Psoas muscle (tissue), 8 donors: ENCODE measurements at regions of chr5 and their contacts with region 1.

Region 1: DNA sequence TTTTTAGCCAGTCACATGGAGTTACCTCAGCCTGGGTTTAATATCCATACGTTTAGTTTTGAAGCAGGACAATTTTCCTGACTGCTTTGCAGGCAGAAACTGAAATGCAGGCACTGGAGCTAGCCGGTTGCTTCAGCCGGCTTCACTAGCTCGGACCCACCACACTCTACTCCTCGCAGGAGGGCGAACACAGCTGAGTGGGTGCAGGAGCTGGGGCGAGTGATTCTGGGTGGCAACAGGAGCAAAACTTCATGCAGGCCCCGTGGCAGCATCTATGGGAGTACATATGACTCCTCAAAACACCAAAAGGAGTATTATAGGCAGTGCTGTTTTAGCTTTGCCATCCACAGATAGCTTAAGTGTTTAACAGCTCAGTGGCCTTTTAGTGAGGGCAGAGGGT is 1211.8 kb upstream of the NUDT12 start:
- DNase-seq: no peak
- ATAC-seq: no peak
- H3K4me3 ChIP-seq: no peak overlapping the region
- H3K27ac ChIP-seq: no peak overlapping the region
- H3K4me1 ChIP-seq: no peaks in the 10 kb centered on the region
- H3K27me3 ChIP-seq: no peaks in the 10 kb centered on the region
- CTCF ChIP-seq: no peak

Region 2: GRCh38 chr5:104734046-104734445 is 40.3 kb before region 1 on chr5:
- intact Hi-C with region 1: loop called in 1 of 2 experiments (anchors 1 kb)
- DNase-seq: no peak
- ATAC-seq: no peak
- H3K4me3 ChIP-seq: no peak overlapping the region
- H3K27ac ChIP-seq: no peak overlapping the region
- H3K4me1 ChIP-seq: no peaks in the 10 kb centered on the region
- H3K27me3 ChIP-seq: no peaks in the 10 kb centered on the region
- CTCF ChIP-seq: no peak